H1 (cell line): ENCODE measurements at regions of chr15 and their contacts with region 1.

Region 1: GRCh38 chr15:92611993-92612745 is 43.4 kb downstream of the FAM174B start:
- DNase-seq: no peak
- H3K4me3 ChIP-seq: no peak overlapping the region
- H3K27ac ChIP-seq: no peak overlapping the region
- H3K4me1 ChIP-seq: peaks cover 0 to 7% (median 2%) of the 10 kb centered on the region in 4 experiments; a peak in 2 of 7 replicates
- H3K27me3 ChIP-seq: no peaks in the 10 kb centered on the region
- CTCF ChIP-seq: peak; percentile 10 to 36 (median 17); a peak in 3 of 4 replicates
- EP300 ChIP-seq: no peak
- POLR2A ChIP-seq: no peak
- RAD21 ChIP-seq: peak; percentile 57 to 73

Region 2: GRCh38 chr15:92683232-92683834 is 71.2 kb after region 1 on chr15:
- CTCF ChIA-PET with region 1: interaction called, 20 read pairs
- POLR2A ChIA-PET with region 1: no interaction called
- DNase-seq: peak; percentile 25 to 59
- H3K4me3 ChIP-seq: no peak overlapping the region
- H3K27ac ChIP-seq: no peak overlapping the region
- H3K4me1 ChIP-seq: no peaks in the 10 kb centered on the region
- H3K27me3 ChIP-seq: no peaks in the 10 kb centered on the region
- CTCF ChIP-seq: peak; percentile 75 to 83 (median 76)
- EP300 ChIP-seq: no peak
- POLR2A ChIP-seq: no peak
- RAD21 ChIP-seq: peak; percentile 92 to 94